Activated CD4-positive, alpha-beta T cell treated with anti-CD3 and anti-CD28 coated beads, Interleukin-2, amount 10 ng/mL, durations not matched to agents 7 days and 5 days (primary cell): ENCODE measurements at regions of chr18 and their contacts with region 1.

Region 1: DNA sequence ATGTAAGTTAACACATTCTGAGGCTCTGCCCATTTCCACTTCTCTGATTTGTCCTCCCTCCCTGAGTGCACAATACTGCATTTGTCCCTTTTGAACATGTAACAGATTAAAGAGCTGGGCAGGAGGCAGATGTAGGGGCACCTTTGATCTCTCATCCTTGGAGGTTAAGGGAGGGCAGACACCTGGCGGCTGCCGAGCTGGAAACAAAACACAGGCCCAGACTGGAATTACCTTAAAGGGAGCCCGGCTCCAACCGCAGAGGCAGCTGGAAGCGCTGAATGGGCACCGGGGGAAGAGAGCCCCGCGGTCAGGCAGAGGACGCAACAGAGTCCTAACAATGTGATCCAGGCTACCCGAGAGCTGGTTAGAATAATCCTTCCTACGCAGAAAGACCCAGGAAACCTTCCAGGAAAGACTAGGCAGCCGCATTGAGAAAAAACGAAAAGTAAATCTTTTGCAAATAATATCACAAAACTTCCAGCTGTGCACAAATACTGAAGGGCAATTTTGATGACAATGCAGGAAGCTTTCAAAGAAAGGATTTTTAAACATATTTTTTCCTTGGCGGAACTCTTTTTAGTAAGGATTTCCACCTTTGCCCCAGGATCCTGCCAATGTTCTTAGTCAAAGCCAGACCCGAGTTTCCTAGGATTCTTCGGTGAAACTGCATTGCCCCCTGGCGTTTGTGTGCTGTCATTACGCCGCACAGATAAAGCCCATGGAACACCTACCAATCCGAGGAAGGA is 216.0 kb downstream of the TGIF1 start:
- DNase-seq: peak; percentile 76
- H3K4me3 Mint-ChIP-seq: no peak overlapping the region
- H3K27ac Mint-ChIP-seq: peak overlapping the region; percentile 71
- H3K4me1 Mint-ChIP-seq: peaks cover 26% of the 10 kb centered on the region
- H3K27me3 Mint-ChIP-seq: peaks cover 5% of the 10 kb centered on the region

Region 2: DNA sequence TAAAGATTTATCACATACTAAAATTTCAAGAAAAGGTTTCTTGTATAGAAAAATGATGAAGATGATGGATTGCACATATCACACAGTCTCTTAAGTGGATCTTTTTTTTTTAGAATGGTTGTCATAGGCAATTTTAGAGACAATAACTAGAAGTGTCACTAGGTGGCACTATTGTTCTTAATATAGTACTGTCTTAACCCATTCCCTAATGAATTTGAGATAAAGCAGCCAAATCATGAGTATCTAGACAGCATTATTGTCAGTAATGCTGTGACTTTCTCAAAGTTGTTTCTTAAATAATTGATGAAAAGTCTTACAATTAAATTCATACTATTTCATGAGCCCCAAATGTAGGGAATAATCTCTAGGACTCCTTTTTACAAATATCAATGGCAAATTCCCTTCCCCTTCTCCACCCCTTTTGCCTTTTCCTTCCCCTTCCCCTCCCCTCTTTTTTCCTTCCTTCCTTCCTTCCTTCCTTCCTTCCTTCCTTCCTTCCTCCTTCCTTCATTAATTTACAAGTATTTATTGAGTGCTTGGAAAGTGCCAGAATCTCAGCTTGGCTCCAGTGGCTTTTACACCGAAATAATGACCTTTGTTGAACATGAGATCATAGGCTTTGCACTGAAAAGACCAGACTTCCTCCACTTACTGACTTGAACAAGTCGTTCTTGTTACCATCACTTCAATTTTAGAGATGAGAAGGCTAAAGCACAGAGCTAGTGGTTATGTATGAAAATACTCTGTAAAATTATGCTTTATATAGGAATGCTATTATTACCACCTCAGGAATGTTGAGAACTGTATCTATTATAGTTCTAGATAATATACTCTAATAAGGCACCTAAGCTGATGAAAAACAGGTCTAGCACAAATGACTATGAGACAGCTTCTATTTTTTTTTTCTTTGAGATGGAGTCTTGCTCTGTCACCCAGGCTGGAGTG is 384.2 kb before region 1 on chr18:
- CTCF ChIA-PET with region 1: interaction called, 20 read pairs
- POLR2A ChIA-PET with region 1: no interaction called
- DNase-seq: peak; percentile 49
- H3K4me3 Mint-ChIP-seq: no peak overlapping the region
- H3K27ac Mint-ChIP-seq: no peak overlapping the region
- H3K4me1 Mint-ChIP-seq: no peaks in the 10 kb centered on the region
- H3K27me3 Mint-ChIP-seq: no peaks in the 10 kb centered on the region

Region 3: GRCh38 chr18:3447895-3448837 is 217.8 kb before region 1 on chr18:
- CTCF ChIA-PET with region 1: interaction called, 22 read pairs
- POLR2A ChIA-PET with region 1: no interaction called
- DNase-seq: peak; percentile 90
- H3K4me3 Mint-ChIP-seq: peak overlapping the region; percentile 89
- H3K27ac Mint-ChIP-seq: peak overlapping the region; percentile 99
- H3K4me1 Mint-ChIP-seq: peaks cover 38% of the 10 kb centered on the region
- H3K27me3 Mint-ChIP-seq: no peaks in the 10 kb centered on the region

Region 4: DNA sequence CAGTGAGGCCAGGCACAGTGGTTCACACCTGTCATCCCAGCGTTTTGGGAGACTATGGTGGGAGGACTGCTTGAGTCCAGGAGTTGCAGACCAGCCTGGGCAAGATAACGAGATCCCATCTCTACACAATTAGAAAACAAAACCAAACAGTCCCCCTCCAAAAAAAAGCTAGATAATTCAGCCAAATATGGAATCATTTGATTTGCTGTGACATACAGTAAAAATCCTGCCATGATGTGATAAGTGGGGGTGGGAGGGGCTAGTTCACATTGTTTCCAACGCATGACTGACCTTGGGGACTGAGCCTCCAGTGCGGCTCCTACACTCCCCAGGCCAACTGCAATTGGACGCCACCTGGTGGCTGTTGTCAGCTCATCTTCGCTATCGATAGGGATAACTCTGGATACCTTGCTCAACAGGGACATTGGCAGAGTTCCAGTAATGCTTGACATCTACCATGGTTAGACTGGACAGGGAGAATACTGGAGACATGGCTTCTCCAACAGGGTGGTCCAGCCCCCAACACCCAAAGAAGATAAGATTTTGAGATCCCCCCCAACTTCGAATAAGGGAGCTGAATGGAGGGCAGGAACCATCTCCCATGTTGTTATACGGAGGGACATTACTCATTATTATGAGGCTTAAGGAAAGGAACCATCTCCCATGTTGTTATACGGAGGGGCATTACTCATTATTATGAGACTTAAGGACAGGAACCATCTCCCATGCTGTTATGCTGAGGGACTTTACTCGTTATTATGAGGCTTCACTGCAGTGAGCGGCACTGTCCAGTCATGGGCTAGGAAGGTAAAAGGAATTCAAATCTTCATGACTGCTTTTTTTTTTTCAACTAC is 80.1 kb before region 1 on chr18:
- CTCF ChIA-PET with region 1: interaction called, 20 read pairs
- POLR2A ChIA-PET with region 1: interaction called, 3 read pairs
- DNase-seq: peak; percentile 69
- H3K4me3 Mint-ChIP-seq: no peak overlapping the region
- H3K27ac Mint-ChIP-seq: peak overlapping the region; percentile 82
- H3K4me1 Mint-ChIP-seq: peaks cover 41% of the 10 kb centered on the region
- H3K27me3 Mint-ChIP-seq: no peaks in the 10 kb centered on the region

Region 5: DNA sequence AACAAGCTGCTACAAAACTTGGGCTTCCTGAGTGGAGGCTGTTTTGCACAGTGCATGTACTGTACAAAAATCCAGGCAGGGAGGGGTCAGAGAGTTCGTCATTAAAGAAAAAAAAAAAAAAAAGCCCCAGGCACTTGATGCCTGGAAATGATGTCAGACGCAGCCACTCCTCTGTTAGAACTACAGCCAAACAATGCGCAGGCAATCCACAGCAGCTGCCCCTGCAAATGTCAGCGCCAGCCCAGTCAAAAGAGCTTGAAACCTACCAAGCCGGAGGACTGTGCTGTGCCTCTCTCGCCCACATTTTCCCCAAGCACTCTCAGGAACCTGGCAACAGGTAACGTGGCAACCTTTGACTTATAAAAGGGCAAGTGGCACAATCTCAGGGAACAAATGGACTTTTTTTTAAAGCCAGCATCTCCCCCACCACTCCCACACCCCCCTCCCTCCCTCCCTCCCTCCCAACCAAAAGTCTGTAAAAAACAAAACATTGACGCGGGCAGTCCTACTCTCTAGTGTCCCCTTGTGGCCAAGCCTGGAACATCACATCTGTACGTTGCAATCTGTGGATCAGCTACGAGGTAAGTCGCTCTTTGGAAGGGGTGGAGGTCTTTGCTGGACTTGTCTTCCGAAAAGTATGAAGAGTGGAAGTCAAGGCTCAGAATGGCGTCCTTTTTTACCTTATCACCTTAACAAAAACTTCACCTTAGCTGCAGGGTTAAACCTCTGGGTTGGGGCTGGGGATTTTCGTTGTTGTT is 71.9 kb before region 1 on chr18:
- CTCF ChIA-PET with region 1: interaction called, 17 read pairs
- POLR2A ChIA-PET with region 1: interaction called, 7 read pairs
- DNase-seq: peak; percentile 91
- H3K4me3 Mint-ChIP-seq: peak overlapping the region; percentile 84
- H3K27ac Mint-ChIP-seq: peak overlapping the region; percentile 99
- H3K4me1 Mint-ChIP-seq: peaks cover 58% of the 10 kb centered on the region
- H3K27me3 Mint-ChIP-seq: no peaks in the 10 kb centered on the region

Region 6: GRCh38 chr18:3852321-3852720 is 186.4 kb after region 1 on chr18:
- CTCF ChIA-PET with region 1: no interaction called
- POLR2A ChIA-PET with region 1: no interaction called
- DNase-seq: no peak
- H3K4me3 Mint-ChIP-seq: no peak overlapping the region
- H3K27ac Mint-ChIP-seq: no peak overlapping the region
- H3K4me1 Mint-ChIP-seq: no peaks in the 10 kb centered on the region
- H3K27me3 Mint-ChIP-seq: peaks cover under 1% of the 10 kb centered on the region